ENCODE measurements at regions of chr6 and their contacts with region 1.

Region 1: DNA sequence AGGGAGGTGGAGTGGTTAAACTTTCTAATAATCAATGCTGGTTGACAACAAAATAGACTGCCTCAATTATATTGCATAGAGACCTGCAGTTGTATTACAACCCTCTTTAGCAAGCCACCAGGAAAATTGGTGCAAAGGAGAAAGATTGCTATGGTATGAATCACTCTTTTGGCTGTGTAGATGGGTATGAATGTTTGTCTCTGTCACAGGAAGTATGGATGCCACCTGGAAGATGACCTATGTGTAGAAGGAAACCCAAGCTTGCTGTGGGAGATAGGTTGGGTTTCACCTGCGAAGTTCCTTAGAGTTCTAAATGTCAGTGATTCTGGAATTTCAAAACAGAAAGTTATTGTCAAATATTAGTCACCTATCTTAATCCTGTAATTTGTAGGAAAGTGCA is 134.6 kb downstream of the SOBP start:
- DNase-seq: no peak
- H3K4me3 Mint-ChIP-seq: no peak overlapping the region
- H3K27ac Mint-ChIP-seq: no peak overlapping the region
- H3K4me1 Mint-ChIP-seq: peaks cover 49% of the 10 kb centered on the region
- H3K27me3 Mint-ChIP-seq: no peaks in the 10 kb centered on the region
- CTCF ChIP-seq: no peak

Region 2: DNA sequence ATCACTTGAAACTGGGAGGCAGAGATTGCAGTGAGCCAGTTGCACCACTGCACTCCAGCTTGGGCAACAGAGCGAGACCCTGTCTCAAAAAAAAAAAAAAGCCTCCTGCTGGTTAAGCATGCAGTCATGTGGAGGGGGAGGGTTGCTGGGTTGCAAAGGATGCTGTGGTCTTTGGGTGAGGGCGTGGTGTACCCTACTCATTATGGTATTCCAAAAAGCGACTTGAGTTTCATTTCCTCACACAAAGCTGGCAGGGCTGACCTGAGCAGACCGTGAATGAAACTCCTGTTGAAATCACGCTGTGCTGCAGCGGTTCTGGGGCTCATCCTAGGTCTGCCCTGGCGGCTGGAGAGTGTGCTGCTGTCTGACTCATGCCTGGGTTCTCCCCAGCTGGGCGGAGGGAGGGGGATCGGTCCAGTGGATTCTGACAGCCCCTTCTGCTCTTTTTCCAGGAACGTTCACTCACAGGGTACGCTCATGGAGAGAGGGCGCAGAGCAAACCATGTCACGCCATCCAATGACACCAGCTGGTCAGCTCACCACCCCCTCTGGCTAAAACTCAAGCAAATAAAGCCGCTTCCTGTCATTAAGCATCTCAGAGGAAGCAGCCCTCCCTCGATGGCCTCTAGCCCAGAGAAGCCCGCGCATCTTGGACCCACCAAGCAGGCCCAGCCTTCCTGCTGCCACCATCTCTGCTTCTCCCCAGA is 33.4 kb after region 1 on chr6:
- CTCF ChIA-PET with region 1: no interaction called
- intact Hi-C with region 1: loop called (anchors 5 kb)
- DNase-seq: no peak
- H3K4me3 Mint-ChIP-seq: no peak overlapping the region
- H3K27ac Mint-ChIP-seq: no peak overlapping the region
- H3K4me1 Mint-ChIP-seq: peaks cover 57% of the 10 kb centered on the region
- H3K27me3 Mint-ChIP-seq: no peaks in the 10 kb centered on the region
- CTCF ChIP-seq: no peak

Region 3: DNA sequence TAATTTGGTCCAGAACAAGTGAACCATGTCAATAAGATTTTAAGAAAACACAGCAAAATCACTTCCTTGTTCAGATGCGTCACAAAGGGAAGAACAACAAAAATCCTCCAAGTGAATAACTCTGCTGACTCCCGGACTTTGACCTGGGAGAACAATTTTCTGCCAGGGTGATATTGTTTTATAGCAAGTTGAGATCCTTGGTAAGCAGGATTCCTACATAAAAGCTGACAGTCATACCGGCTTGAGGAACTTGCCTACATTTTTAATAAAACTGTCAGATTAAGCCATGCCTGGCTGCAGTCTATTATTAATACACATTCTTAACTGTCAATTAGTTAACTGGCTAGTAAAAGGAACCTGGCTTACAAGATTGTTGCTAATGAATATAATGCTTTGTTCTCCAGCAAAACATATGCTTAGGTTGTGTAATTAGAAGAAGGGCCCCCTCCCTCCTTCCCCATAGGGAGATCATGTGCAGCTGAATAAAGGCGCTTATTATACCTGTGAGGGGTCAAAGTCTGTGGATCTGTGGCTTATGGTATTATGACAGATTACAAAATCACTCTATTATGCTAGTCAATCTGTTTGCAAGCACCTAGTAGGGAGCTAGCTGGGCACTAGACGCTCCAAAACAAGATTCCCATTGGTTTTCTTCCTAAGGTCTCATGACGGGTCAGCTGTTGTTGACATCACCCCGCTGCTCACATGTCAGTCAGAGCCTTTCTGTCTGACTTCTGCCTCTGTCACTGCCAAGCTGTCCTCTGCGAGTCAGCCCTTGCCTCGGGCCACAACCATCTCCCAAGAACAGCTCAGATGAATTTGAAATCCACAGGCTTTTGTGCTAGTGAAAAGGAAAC is 378.1 kb after region 1 on chr6:
- CTCF ChIA-PET with region 1: no interaction called
- intact Hi-C with region 1: no loop called
- DNase-seq: peak; percentile 66
- H3K4me3 Mint-ChIP-seq: peak overlapping the region; percentile 62
- H3K27ac Mint-ChIP-seq: peak overlapping the region; percentile 99
- H3K4me1 Mint-ChIP-seq: peaks cover 42% of the 10 kb centered on the region
- H3K27me3 Mint-ChIP-seq: no peaks in the 10 kb centered on the region
- CTCF ChIP-seq: no peak

Measured in Calu3 (cell line).